WTC11 (cell line): ENCODE measurements at regions of chr5 and their contacts with region 1.

Region 1: GRCh38 chr5:141618804-141619554 is at the start of gene DIAPH1:
- DNase-seq: peak; percentile 97
- ATAC-seq: peak; percentile 94
- H3K4me3 Mint-ChIP-seq: peak within 1 kb of the TSS; percentile 95
- H3K27ac Mint-ChIP-seq: peak within 1 kb of the TSS; percentile 97
- H3K4me1 Mint-ChIP-seq: peaks cover 41% of the 10 kb centered on the region
- H3K27me3 Mint-ChIP-seq: no peaks in the 10 kb centered on the region; the same call in 1 of the 2 replicates
- CTCF ChIP-seq: peak; percentile 93
- total RNA-seq, gene DIAPH1: 90.9 to 109 TPM (median 96.0 TPM) in 3 replicates

Region 2: DNA sequence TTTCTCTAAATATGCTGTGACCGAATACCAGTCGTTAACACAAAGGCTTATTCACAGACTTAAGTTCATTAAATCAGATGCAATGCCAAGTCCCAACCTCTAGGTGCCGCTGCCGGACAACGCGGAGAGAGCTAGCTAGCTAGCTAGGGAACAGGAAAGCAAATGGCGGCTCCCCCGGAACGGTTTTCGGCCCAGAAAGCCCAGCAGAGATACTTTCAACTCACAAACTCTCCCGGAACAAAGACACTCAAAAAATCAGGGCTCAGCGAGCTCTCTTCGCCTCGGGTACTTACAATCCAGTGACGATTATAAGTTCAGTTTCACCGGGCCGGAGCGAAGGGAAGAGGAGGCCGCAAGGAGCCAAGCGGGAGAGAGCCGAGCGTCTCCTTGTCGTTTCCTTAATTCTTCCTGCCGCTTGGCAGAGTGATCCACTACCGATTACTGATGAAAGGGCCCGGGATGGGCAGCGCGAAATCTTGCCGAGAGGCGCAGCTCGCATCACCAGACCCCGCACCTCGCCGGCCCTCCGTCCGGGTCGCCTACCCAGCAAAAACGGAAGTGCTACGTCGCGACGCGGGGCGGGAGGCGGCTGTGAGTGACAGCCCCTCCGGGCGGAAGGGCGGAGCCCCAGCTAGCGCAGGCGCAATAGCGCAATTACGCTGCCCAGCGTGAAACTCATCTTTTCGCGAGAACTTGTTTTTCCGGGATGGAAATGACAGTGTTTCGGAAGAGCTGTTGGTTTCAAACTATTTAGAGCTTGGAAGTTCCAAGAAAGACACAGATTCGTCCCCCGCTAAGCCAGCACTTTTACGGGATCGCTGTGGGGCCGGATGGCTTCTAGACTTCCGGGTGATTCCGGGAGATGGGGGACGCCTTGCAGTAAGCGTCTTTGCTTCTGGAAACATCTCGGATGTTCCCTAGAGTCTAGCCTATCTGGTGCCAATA is 298.5 kb before region 1 on chr5 and contains the start of gene TAF7:
- CTCF ChIA-PET with region 1: no interaction called
- POLR2A ChIA-PET with region 1: no interaction called
- DNase-seq: peak; percentile 95
- ATAC-seq: peak; percentile 94
- H3K4me3 Mint-ChIP-seq: peak within 1 kb of the TSS; percentile 99
- H3K27ac Mint-ChIP-seq: peak within 1 kb of the TSS; percentile 99
- H3K4me1 Mint-ChIP-seq: peaks cover 24% of the 10 kb centered on the region
- H3K27me3 Mint-ChIP-seq: peaks cover 24% of the 10 kb centered on the region
- CTCF ChIP-seq: peak; percentile 85
- total RNA-seq, gene TAF7: 87.8 to 96.2 TPM (median 90.1 TPM) in 3 replicates

Region 3: DNA sequence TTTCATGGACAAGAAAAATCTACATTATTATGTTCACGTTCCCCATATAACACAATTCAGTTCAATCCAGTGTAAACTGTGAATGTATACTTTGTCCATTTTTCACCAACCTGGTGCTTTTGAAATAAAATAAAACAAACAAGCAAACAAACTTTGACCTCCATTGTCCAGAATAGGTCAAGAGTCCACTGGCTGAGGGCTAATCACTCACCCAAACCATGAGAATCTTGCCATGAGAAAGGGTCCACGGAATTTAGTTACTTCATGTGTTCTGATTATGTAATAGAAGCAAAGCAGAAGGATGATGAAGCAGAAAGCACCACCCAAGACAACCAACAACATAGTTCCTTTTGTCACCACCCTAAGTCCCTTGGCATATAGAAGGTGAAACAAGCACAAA is 28.9 kb before region 1 on chr5:
- CTCF ChIA-PET with region 1: interaction called, 141 read pairs
- POLR2A ChIA-PET with region 1: interaction called, 18 read pairs
- DNase-seq: no peak
- ATAC-seq: no peak
- H3K4me3 Mint-ChIP-seq: no peak overlapping the region
- H3K27ac Mint-ChIP-seq: no peak overlapping the region
- H3K4me1 Mint-ChIP-seq: no peaks in the 10 kb centered on the region
- H3K27me3 Mint-ChIP-seq: no peaks in the 10 kb centered on the region
- CTCF ChIP-seq: no peak

Region 4: DNA sequence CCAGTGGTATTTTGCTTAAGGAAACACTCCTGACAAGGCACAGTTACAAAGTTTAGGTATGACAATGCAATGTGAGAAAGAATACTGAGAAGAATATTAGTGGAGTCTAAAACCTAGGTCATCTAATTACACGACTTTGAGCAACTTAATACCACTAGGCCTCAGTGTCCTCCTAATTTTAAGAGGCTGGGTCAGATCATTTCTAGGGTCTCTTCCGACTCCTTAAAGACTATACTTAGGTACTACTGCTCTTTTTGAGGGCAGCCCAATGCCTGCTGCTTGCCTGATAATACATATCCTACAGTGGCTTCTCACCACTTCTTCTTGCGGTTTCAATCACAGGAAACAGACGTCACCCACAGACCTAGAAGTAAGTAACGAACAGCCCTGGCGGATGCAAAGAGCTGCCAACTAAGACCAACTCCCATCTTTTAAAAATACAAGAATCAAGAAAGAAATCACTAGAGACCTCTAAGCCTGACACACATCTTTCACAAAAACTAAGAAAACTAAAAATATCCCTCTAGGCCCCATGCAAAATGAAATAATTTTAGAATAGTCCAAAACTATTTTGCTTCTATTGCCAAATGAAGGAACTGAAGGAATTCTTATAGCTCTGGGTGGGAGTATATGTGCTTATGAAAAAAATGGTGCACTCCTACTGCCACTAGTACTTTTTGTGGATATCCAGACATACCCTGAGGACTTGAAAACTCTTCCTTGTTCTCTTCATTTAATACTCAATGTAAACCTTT is 13.3 kb before region 1 on chr5:
- CTCF ChIA-PET with region 1: interaction called, 12 read pairs
- POLR2A ChIA-PET with region 1: interaction called, 3 read pairs
- DNase-seq: no peak
- ATAC-seq: no peak; the same call in 1 of the 2 replicates
- H3K4me3 Mint-ChIP-seq: no peak overlapping the region
- H3K27ac Mint-ChIP-seq: peak overlapping the region; percentile 8
- H3K4me1 Mint-ChIP-seq: peaks cover 14% of the 10 kb centered on the region
- H3K27me3 Mint-ChIP-seq: no peaks in the 10 kb centered on the region
- CTCF ChIP-seq: no peak

Region 5: GRCh38 chr5:141650851-141651727 is 32.1 kb after region 1 on chr5 and contains the start of gene FCHSD1:
- CTCF ChIA-PET with region 1: interaction called, 20 read pairs
- POLR2A ChIA-PET with region 1: interaction called, 5 read pairs
- DNase-seq: peak; percentile 94
- ATAC-seq: peak; percentile 95
- H3K4me3 Mint-ChIP-seq: peak within 1 kb of the TSS; percentile 99
- H3K27ac Mint-ChIP-seq: peak within 1 kb of the TSS; percentile 96
- H3K4me1 Mint-ChIP-seq: peaks cover 20% of the 10 kb centered on the region
- H3K27me3 Mint-ChIP-seq: no peaks in the 10 kb centered on the region
- CTCF ChIP-seq: no peak
- total RNA-seq, gene FCHSD1: 43.6 to 50.3 TPM (median 44.8 TPM) in 3 replicates

Region 6: DNA sequence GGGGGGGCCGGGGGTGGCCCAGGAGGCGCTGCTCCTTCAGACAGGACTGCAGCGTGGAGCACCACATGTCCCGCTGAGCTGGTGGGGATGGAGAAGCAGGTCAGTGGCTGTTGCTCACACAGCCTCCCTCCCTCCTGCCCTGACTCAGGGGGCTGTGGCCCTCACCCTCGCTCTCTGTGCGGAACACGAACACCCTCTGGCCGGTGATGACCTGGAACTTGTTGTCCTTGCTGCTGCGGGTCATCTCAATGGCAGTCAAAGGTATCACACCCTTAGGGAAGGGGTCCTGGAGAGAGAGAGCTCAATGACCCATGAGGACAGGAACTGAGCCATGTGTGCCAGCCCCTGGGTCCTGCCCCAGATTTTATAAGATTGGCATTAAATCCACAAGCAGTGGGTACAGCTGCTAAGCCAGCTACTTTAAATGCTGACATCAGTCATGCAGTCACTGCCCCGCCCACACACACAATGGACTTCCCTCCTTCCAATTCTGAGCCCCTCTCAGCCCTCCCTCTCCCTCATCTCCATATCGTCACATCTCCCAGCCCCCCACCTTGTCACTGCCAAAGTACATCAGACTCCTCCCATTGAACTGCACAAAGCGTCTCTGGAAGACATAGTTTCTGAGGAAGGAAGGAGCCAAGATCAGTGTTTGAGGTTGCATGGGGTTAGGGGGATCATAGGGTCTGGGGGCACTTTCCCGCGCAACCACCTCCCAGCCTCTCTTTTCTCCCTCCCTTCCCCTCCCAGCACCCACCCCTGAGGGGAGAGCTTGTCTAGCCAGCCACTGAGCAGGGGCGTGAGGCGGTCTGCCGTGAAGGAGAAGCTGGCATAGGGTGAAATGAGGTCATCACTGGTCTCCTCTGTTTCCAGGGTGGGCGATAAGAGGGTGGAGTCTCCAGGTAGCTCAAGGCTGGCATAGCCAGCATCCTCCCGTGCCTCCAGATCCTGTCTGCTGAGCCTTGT is 54.2 kb after region 1 on chr5:
- CTCF ChIA-PET with region 1: interaction called, 11 read pairs
- POLR2A ChIA-PET with region 1: no interaction called
- DNase-seq: no peak
- ATAC-seq: peak; percentile 2; the same call in 1 of the 2 replicates
- H3K4me3 Mint-ChIP-seq: no peak overlapping the region
- H3K27ac Mint-ChIP-seq: peak overlapping the region; percentile 42
- H3K4me1 Mint-ChIP-seq: peaks cover 32% of the 10 kb centered on the region
- H3K27me3 Mint-ChIP-seq: no peaks in the 10 kb centered on the region
- CTCF ChIP-seq: no peak

Region 7: DNA sequence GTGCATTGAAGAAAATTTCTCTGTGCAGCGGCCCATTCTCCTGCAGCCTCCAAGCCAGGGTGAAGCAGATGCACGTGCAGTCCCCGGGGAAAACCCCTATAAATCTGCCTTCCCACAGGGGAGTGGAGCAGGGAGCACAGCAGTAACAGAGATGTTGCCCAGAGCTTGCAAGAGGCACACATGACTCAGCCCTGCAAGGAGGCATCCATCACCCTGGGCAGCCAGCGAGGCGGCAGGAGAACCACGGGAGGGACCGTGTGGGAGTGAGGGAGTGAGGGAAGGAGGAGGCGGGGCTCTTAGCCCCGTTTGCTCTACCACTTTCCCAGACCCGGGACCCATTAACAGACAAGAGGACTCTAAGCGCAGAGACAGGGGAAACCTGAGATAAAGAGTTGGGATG is 159.2 kb after region 1 on chr5:
- CTCF ChIA-PET with region 1: no interaction called
- POLR2A ChIA-PET with region 1: no interaction called
- DNase-seq: no peak
- ATAC-seq: peak; percentile 45
- H3K4me3 Mint-ChIP-seq: no peak overlapping the region
- H3K27ac Mint-ChIP-seq: no peak overlapping the region
- H3K4me1 Mint-ChIP-seq: peaks cover 38% of the 10 kb centered on the region
- H3K27me3 Mint-ChIP-seq: no peaks in the 10 kb centered on the region
- CTCF ChIP-seq: no peak